B cell (primary cell): ENCODE measurements at regions of chr3 and their contacts with region 1.

Region 1: GRCh38 chr3:123652346-123652984 is 67.6 kb upstream of the HACD2 start:
- DNase-seq: peak; percentile 46
- ATAC-seq: peak; percentile 45
- H3K4me3 ChIP-seq: no peak overlapping the region
- H3K4me3 Mint-ChIP-seq: no peak overlapping the region
- H3K27ac ChIP-seq: no peak overlapping the region
- H3K27ac Mint-ChIP-seq: no peak overlapping the region
- H3K4me1 ChIP-seq: no peaks in the 10 kb centered on the region
- H3K4me1 Mint-ChIP-seq: no peaks in the 10 kb centered on the region
- H3K27me3 ChIP-seq: no peaks in the 10 kb centered on the region
- H3K27me3 Mint-ChIP-seq: peaks cover 3% of the 10 kb centered on the region
- CTCF ChIP-seq: peak; percentile 68

Region 2: GRCh38 chr3:123642182-123642956 is 10.1 kb before region 1 on chr3:
- CTCF ChIA-PET with region 1: interaction called, 10 read pairs
- POLR2A ChIA-PET with region 1: no interaction called
- intact Hi-C with region 1: no loop called
- DNase-seq: peak; percentile 64
- ATAC-seq: peak; percentile 41
- H3K4me3 ChIP-seq: no peak overlapping the region
- H3K4me3 Mint-ChIP-seq: no peak overlapping the region
- H3K27ac ChIP-seq: no peak overlapping the region
- H3K27ac Mint-ChIP-seq: no peak overlapping the region
- H3K4me1 ChIP-seq: no peaks in the 10 kb centered on the region
- H3K4me1 Mint-ChIP-seq: no peaks in the 10 kb centered on the region
- H3K27me3 ChIP-seq: peaks cover 0 to 3% (median 0%) of the 10 kb centered on the region in 4 experiments
- H3K27me3 Mint-ChIP-seq: no peaks in the 10 kb centered on the region
- CTCF ChIP-seq: peak; percentile 75

Region 3: DNA sequence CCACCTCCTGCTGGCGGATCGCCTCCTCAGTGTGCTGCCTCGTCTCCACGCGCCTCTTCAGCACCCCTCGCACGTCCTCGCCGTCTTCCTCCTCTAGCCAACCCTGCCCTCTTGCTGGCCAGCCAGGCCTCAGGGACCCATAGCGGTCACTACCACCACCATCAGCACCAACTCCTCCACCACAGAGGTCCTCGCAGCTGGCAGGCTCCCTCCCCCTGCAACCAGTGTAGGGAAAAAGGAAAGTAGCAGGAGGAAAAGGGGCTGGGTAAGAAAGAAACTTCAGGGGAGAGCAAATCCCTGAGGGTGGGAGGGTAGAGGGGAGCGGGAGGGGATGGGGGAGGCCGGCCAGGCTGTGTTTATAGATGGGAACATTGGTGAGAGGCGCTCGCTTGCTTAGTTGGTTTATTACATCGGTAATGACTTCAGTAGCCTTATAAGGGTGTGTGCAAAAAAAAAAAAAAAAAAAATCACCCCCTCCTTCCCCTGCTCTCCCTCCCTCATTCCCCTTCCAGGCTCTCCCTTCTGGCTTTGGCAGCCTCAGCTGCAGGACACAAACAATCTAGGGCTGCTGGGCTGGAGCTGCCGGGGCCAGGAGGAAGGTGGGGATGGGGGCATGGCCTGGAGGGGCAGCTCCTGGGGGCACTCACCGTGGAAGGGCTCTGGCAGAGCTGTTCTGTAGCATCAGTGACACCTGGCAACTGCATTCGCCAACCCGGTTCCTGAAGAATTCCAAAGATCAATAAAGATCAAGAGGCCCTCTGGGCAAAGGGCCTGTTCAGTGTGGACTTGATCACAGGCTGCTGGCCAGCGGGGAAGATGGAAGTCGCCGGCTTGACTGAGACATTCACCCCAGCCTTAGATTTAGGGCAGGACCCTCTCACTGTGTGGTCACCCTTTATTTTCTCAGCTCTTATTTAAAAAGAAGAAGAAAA is 48.6 kb after region 1 on chr3:
- CTCF ChIA-PET with region 1: interaction called, 29 read pairs
- POLR2A ChIA-PET with region 1: no interaction called
- intact Hi-C with region 1: loop called (anchors 1 kb)
- DNase-seq: no peak
- ATAC-seq: no peak
- H3K4me3 ChIP-seq: no peak overlapping the region
- H3K4me3 Mint-ChIP-seq: no peak overlapping the region
- H3K27ac ChIP-seq: no peak overlapping the region
- H3K27ac Mint-ChIP-seq: no peak overlapping the region
- H3K4me1 ChIP-seq: peaks cover 3 to 4% of the 10 kb centered on the region in 2 donors
- H3K4me1 Mint-ChIP-seq: peaks cover 5% of the 10 kb centered on the region
- H3K27me3 ChIP-seq: no peaks in the 10 kb centered on the region
- H3K27me3 Mint-ChIP-seq: peaks cover 13% of the 10 kb centered on the region
- CTCF ChIP-seq: no peak